ENCODE measurements at regions of chr6 and their contacts with region 1.

Region 1: GRCh38 chr6:111709615-111710398 is 104.1 kb upstream of the TRAF3IP2 start:
- DNase-seq: peak; percentile 43
- H3K4me3 Mint-ChIP-seq: no peak overlapping the region
- H3K27ac Mint-ChIP-seq: peak overlapping the region; percentile 49
- H3K4me1 Mint-ChIP-seq: peaks cover 44% of the 10 kb centered on the region
- H3K27me3 Mint-ChIP-seq: no peaks in the 10 kb centered on the region

Region 2: GRCh38 chr6:110398778-110399177 is 1311.0 kb before region 1 on chr6:
- intact Hi-C with region 1: no loop called
- DNase-seq: no peak
- H3K4me3 Mint-ChIP-seq: no peak overlapping the region
- H3K27ac Mint-ChIP-seq: no peak overlapping the region
- H3K4me1 Mint-ChIP-seq: peaks cover 2% of the 10 kb centered on the region
- H3K27me3 Mint-ChIP-seq: peaks cover 8% of the 10 kb centered on the region

Region 3: GRCh38 chr6:111663692-111664564 is 45.9 kb before region 1 on chr6:
- intact Hi-C with region 1: no loop called
- DNase-seq: no peak
- H3K4me3 Mint-ChIP-seq: no peak overlapping the region
- H3K27ac Mint-ChIP-seq: peak overlapping the region; percentile 24
- H3K4me1 Mint-ChIP-seq: peaks cover 7% of the 10 kb centered on the region
- H3K27me3 Mint-ChIP-seq: no peaks in the 10 kb centered on the region

Region 4: DNA sequence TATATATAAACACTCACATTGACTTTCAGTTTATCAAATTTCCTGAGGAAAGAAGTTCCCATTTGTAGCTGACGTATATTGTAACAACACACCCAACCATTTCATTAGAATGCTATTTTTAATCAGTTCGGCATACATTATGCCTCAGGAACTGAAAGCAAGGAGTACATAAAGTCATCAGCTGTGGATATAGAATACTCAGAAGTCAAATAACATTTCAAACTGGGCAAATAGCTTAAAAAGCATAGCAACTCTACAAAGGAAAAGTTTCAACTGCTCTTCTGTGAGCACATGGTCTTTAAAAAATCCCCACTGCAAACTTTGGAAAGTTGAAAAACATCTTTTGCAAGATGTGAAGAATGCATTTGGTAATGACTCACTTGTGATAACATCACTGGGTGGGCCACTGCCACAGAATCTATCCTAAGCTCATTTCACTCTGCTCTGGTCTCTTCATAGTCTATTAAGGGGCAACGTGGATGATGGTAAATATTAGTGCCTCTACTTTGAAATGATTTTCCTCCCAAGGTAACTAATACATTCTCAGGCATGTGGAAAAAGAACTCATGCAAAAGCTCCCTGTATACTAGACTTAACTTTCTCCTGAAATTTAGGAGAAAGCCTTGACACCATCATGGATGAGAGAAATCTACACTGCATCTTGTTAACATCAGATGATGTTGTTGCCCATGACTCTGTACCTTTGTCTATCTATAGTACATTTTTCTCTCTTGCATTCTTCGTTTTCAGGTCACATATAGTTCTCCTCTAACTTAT is 114.2 kb after region 1 on chr6:
- intact Hi-C with region 1: loop called (anchors 5 kb)
- DNase-seq: no peak
- H3K4me3 Mint-ChIP-seq: peak overlapping the region; percentile 66
- H3K27ac Mint-ChIP-seq: peak overlapping the region; percentile 89
- H3K4me1 Mint-ChIP-seq: peaks cover 68% of the 10 kb centered on the region
- H3K27me3 Mint-ChIP-seq: no peaks in the 10 kb centered on the region

Region 5: GRCh38 chr6:111997078-111997852 is 287.5 kb after region 1 on chr6:
- intact Hi-C with region 1: loop called (anchors 1 kb)
- DNase-seq: peak; percentile 69
- H3K4me3 Mint-ChIP-seq: no peak overlapping the region
- H3K27ac Mint-ChIP-seq: no peak overlapping the region
- H3K4me1 Mint-ChIP-seq: peaks cover 37% of the 10 kb centered on the region
- H3K27me3 Mint-ChIP-seq: no peaks in the 10 kb centered on the region

Region 6: GRCh38 chr6:112163295-112164257 is 453.8 kb after region 1 on chr6:
- intact Hi-C with region 1: loop called (anchors 5 kb)
- DNase-seq: peak; percentile 61
- H3K4me3 Mint-ChIP-seq: peak overlapping the region; percentile 45
- H3K27ac Mint-ChIP-seq: no peak overlapping the region
- H3K4me1 Mint-ChIP-seq: peaks cover 16% of the 10 kb centered on the region
- H3K27me3 Mint-ChIP-seq: peaks cover 55% of the 10 kb centered on the region

Measured in activated T-helper 2 cell treated with anti-CD3 and anti-CD28 coated beads, Interferon-gamma antibody, Interleukin-2, Interleukin-4, amounts not matched to agents 10 μg/mL and 5 μg/mL and 100 μg/mL, durations not matched to agents 14 hours and 24 hours and 36 hours (primary cell).